CD14-positive monocyte (primary cell): ENCODE measurements at regions of chr22 and their contacts with region 1.

Region 1: GRCh38 chr22:46737976-46738646 is at the start of gene CERK:
- DNase-seq: peak; percentile 53 to 68 (median 64)
- H3K4me3 ChIP-seq: peak within 1 kb of the TSS; percentile 62 to 87 (median 66)
- H3K4me3 Mint-ChIP-seq: peak within 1 kb of the TSS; percentile 100
- H3K27ac ChIP-seq: peak within 1 kb of the TSS; percentile 61 to 88
- H3K27ac Mint-ChIP-seq: peak within 1 kb of the TSS; percentile 92 to 99 (median 95)
- H3K4me1 ChIP-seq: peaks cover 48 to 56% of the 10 kb centered on the region in 2 donors
- H3K4me1 Mint-ChIP-seq: peaks cover 48% of the 10 kb centered on the region
- H3K27me3 ChIP-seq: no peaks in the 10 kb centered on the region
- H3K27me3 Mint-ChIP-seq: peaks cover 0 to 4% (median 2%) of the 10 kb centered on the region in 3 donors
- CTCF ChIP-seq: no peak
- polyA plus RNA-seq, gene CERK: 22.4 to 40.2 (median 24.5) TPM

Region 2: GRCh38 chr22:46592390-46592872 is 145.7 kb before region 1 on chr22:
- intact Hi-C with region 1: loop called in 1 of 2 experiments (anchors 10 kb)
- DNase-seq: peak; percentile 51 to 62 (median 56)
- H3K4me3 ChIP-seq: peak overlapping the region; percentile 5 to 70 (median 53)
- H3K4me3 Mint-ChIP-seq: peak overlapping the region; percentile 74 to 83
- H3K27ac ChIP-seq: peak overlapping the region; percentile 95 to 98
- H3K27ac Mint-ChIP-seq: peak overlapping the region; percentile 92 to 97 (median 96)
- H3K4me1 ChIP-seq: peaks cover 71 to 90% of the 10 kb centered on the region in 2 donors
- H3K4me1 Mint-ChIP-seq: peaks cover 64% of the 10 kb centered on the region
- H3K27me3 ChIP-seq: no peaks in the 10 kb centered on the region
- H3K27me3 Mint-ChIP-seq: peaks cover 0 to 1% (median 0%) of the 10 kb centered on the region in 3 donors
- CTCF ChIP-seq: no peak

Region 3: GRCh38 chr22:46754110-46754799 is 16.1 kb after region 1 on chr22:
- intact Hi-C with region 1: loop called (anchors 2 kb)
- DNase-seq: peak; percentile 98 to 100 (median 98)
- H3K4me3 ChIP-seq: peak overlapping the region in 2 of 3 experiments; percentile 10 to 53
- H3K4me3 Mint-ChIP-seq: peak overlapping the region; percentile 56 to 79
- H3K27ac ChIP-seq: peak overlapping the region; percentile 100
- H3K27ac Mint-ChIP-seq: peak overlapping the region; percentile 100
- H3K4me1 ChIP-seq: peaks cover 91 to 92% of the 10 kb centered on the region in 2 donors
- H3K4me1 Mint-ChIP-seq: peaks cover 84% of the 10 kb centered on the region
- H3K27me3 ChIP-seq: no peaks in the 10 kb centered on the region
- H3K27me3 Mint-ChIP-seq: peaks cover 0 to 7% (median 5%) of the 10 kb centered on the region in 3 donors
- CTCF ChIP-seq: no peak

Region 4: GRCh38 chr22:46774253-46774979 is 36.3 kb after region 1 on chr22:
- intact Hi-C with region 1: loop called in 1 of 2 experiments (anchors 5 kb)
- DNase-seq: peak; percentile 85 to 97 (median 93)
- H3K4me3 ChIP-seq: peak overlapping the region in 1 of 3 experiments; percentile 61
- H3K4me3 Mint-ChIP-seq: peak overlapping the region; percentile 64 to 82
- H3K27ac ChIP-seq: peak overlapping the region; percentile 95
- H3K27ac Mint-ChIP-seq: peak overlapping the region; percentile 95 to 98 (median 97)
- H3K4me1 ChIP-seq: peaks cover 81% of the 10 kb centered on the region in 2 donors
- H3K4me1 Mint-ChIP-seq: peaks cover 80% of the 10 kb centered on the region
- H3K27me3 ChIP-seq: no peaks in the 10 kb centered on the region
- H3K27me3 Mint-ChIP-seq: peaks cover 0 to 3% (median 1%) of the 10 kb centered on the region in 3 donors
- CTCF ChIP-seq: no peak

Region 5: GRCh38 chr22:46803031-46803880 is 65.1 kb after region 1 on chr22:
- intact Hi-C with region 1: loop called (anchors 5 kb)
- DNase-seq: peak; percentile 55 to 69 (median 58)
- H3K4me3 ChIP-seq: no peak overlapping the region
- H3K4me3 Mint-ChIP-seq: peak overlapping the region in 1 of 2 donors; percentile 61
- H3K27ac ChIP-seq: peak overlapping the region in 1 of 2 donors; percentile 22
- H3K27ac Mint-ChIP-seq: peak overlapping the region in 4 of 7 donors; percentile 23 to 67 (median 54)
- H3K4me1 ChIP-seq: no peaks in the 10 kb centered on the region
- H3K4me1 Mint-ChIP-seq: peaks cover 14% of the 10 kb centered on the region
- H3K27me3 ChIP-seq: no peaks in the 10 kb centered on the region
- H3K27me3 Mint-ChIP-seq: peaks cover 0 to 2% (median 1%) of the 10 kb centered on the region in 3 donors
- CTCF ChIP-seq: peak; percentile 99

Region 6: DNA sequence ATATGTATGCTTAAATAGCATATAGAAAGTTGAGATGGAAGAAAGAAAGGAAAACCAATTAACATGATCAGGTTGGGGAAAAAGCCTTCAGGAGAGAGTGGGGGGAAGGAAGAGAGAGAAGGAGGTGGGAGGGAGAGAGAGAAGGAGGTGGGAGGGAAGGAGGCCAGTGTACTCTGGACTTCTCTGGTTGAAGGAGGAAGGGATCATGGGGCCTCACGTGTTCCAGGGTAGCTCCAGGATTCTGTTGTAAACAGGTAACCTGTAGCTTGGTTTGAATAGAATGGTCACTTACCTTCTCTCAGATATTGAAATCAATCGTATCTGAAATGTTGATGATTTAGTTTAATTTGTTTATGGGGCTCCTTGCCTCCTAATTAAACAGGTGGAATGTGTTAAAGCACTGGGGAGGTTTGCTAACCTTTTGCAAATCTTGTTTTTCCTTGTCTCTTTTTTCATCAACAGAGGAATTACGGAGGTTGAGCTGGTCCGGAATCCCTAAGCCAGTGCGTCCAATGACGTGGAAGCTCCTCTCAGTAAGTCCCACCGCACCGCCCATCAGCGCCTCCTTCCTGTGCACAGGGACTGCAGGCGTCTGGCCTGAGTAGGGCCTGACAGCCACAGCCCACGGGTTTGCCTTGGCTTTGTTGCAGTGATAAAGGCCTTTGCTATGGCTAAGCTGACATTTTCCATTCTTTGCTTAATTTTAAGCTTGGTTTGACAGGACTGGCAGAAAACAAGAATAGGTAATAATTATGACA is 140.3 kb after region 1 on chr22:
- intact Hi-C with region 1: no loop called
- DNase-seq: no peak
- H3K4me3 ChIP-seq: no peak overlapping the region
- H3K4me3 Mint-ChIP-seq: no peak overlapping the region
- H3K27ac ChIP-seq: no peak overlapping the region
- H3K27ac Mint-ChIP-seq: peak overlapping the region in 1 of 7 donors; percentile 52
- H3K4me1 ChIP-seq: no peaks in the 10 kb centered on the region
- H3K4me1 Mint-ChIP-seq: no peaks in the 10 kb centered on the region
- H3K27me3 ChIP-seq: no peaks in the 10 kb centered on the region
- H3K27me3 Mint-ChIP-seq: peaks cover 0 to 2% (median 0%) of the 10 kb centered on the region in 3 donors
- CTCF ChIP-seq: no peak